ENCODE measurements at regions of chr1 and their contacts with region 1.

Region 1: GRCh38 chr1:29171089-29171488 is 10.6 kb downstream of the SRSF4 start:
- DNase-seq: no peak
- ATAC-seq: no peak
- H3K4me3 ChIP-seq: no peak overlapping the region
- H3K4me3 Mint-ChIP-seq: peak overlapping the region; percentile 52
- H3K27ac ChIP-seq: no peak overlapping the region
- H3K27ac Mint-ChIP-seq: no peak overlapping the region
- H3K4me1 ChIP-seq: peaks cover 43% of the 10 kb centered on the region
- H3K4me1 Mint-ChIP-seq: peaks cover 67% of the 10 kb centered on the region
- H3K27me3 ChIP-seq: no peaks in the 10 kb centered on the region
- H3K27me3 Mint-ChIP-seq: no peaks in the 10 kb centered on the region
- CTCF ChIP-seq: no peak

Region 2: GRCh38 chr1:29202584-29203340 is 31.7 kb after region 1 on chr1:
- CTCF ChIA-PET with region 1: interaction called, 9 read pairs
- POLR2A ChIA-PET with region 1: no interaction called
- intact Hi-C with region 1: loop called in 1 of 2 experiments (anchors 5 kb)
- DNase-seq: peak; percentile 67 to 95 (median 87)
- ATAC-seq: peak; percentile 84
- H3K4me3 ChIP-seq: no peak overlapping the region
- H3K4me3 Mint-ChIP-seq: no peak overlapping the region
- H3K27ac ChIP-seq: no peak overlapping the region
- H3K27ac Mint-ChIP-seq: no peak overlapping the region
- H3K4me1 ChIP-seq: no peaks in the 10 kb centered on the region
- H3K4me1 Mint-ChIP-seq: no peaks in the 10 kb centered on the region
- H3K27me3 ChIP-seq: no peaks in the 10 kb centered on the region
- H3K27me3 Mint-ChIP-seq: no peaks in the 10 kb centered on the region
- CTCF ChIP-seq: peak; percentile 93

Region 3: GRCh38 chr1:29490204-29490934 is 319.3 kb after region 1 on chr1:
- CTCF ChIA-PET with region 1: no interaction called
- POLR2A ChIA-PET with region 1: no interaction called
- intact Hi-C with region 1: no loop called
- DNase-seq: no peak
- ATAC-seq: no peak
- H3K4me3 ChIP-seq: no peak overlapping the region
- H3K4me3 Mint-ChIP-seq: no peak overlapping the region
- H3K27ac ChIP-seq: no peak overlapping the region
- H3K27ac Mint-ChIP-seq: no peak overlapping the region
- H3K4me1 ChIP-seq: no peaks in the 10 kb centered on the region
- H3K4me1 Mint-ChIP-seq: no peaks in the 10 kb centered on the region
- H3K27me3 ChIP-seq: no peaks in the 10 kb centered on the region
- H3K27me3 Mint-ChIP-seq: peaks cover 21% of the 10 kb centered on the region
- CTCF ChIP-seq: no peak